PC-9 (cell line): ENCODE measurements at regions of chr4 and their contacts with region 1.

Region 1: GRCh38 chr4:48079972-48080391 is 54.1 kb downstream of the TXK start:
- DNase-seq: peak; percentile 23 to 96
- H3K4me3 ChIP-seq: peak overlapping the region; percentile 43; the same call in 1 of the 2 replicates
- H3K27ac ChIP-seq: peak overlapping the region; percentile 86
- H3K4me1 ChIP-seq: peaks cover 58% of the 10 kb centered on the region
- H3K27me3 ChIP-seq: no peaks in the 10 kb centered on the region
- CTCF ChIP-seq: no peak

Region 2: DNA sequence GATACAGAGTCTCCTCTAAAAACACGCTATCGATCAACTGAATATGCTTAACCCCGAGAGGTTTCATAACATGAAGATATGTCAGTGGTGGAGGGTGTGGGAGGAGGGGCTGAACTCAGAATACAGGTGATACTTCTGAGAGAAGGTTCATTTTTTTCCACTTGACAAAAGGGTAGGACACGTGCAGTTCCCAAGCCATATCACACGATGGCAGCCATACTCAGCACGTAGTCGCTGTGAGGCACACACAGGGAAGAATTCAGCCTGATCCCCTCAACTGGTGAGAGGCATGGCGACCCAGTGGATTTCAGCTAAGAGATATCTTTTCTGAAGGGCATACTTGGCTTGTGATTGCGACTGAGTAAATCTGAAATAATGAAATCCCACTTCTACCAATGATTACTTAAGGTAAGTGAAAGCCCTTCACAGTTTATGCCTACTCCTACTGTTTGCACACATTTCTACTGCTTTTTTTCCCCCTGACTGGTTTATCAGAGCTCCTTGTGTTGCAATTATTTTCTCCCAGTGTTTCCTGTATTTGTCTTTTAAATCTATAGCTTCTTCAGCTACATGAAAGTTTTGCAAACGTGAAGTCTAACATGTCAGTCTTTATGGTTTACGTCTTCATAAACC is 375.2 kb before region 1 on chr4:
- CTCF ChIA-PET with region 1: no interaction called
- POLR2A ChIA-PET with region 1: no interaction called
- intact Hi-C with region 1: loop called (anchors 10 kb)
- DNase-seq: peak in 1 of 2 experiments; percentile 16
- H3K4me3 ChIP-seq: no peak overlapping the region
- H3K27ac ChIP-seq: no peak overlapping the region
- H3K4me1 ChIP-seq: no peaks in the 10 kb centered on the region
- H3K27me3 ChIP-seq: no peaks in the 10 kb centered on the region
- CTCF ChIP-seq: peak; percentile 49; the same call in 1 of the 2 replicates

Region 3: GRCh38 chr4:47914220-47914925 is 165.6 kb before region 1 on chr4 and contains the start of gene NFXL1:
- CTCF ChIA-PET with region 1: no interaction called
- POLR2A ChIA-PET with region 1: no interaction called
- intact Hi-C with region 1: loop called (anchors 5 kb)
- DNase-seq: peak; percentile 90 to 93
- H3K4me3 ChIP-seq: peak within 1 kb of the TSS; percentile 89
- H3K27ac ChIP-seq: peak within 1 kb of the TSS; percentile 84
- H3K4me1 ChIP-seq: peaks cover 17% of the 10 kb centered on the region
- H3K27me3 ChIP-seq: no peaks in the 10 kb centered on the region
- CTCF ChIP-seq: no peak
- total RNA-seq, gene NFXL1: 15.5 and 15.7 TPM in 2 replicates